Right cardiac atrium (tissue), 5 donors: ENCODE measurements at regions of chr22 and their contacts with region 1.

Region 1: GRCh38 chr22:24200616-24201212 is 19.4 kb downstream of the SUSD2 start:
- DNase-seq: no peak
- ATAC-seq: no peak
- H3K4me3 ChIP-seq: no peak overlapping the region
- H3K27ac ChIP-seq: no peak overlapping the region
- H3K4me1 ChIP-seq: peaks cover under 1% of the 10 kb centered on the region
- H3K27me3 ChIP-seq: no peaks in the 10 kb centered on the region

Region 2: GRCh38 chr22:24236656-24237055 is 35.9 kb after region 1 on chr22:
- intact Hi-C with region 1: loop called in 2 of 4 experiments (anchors 5 kb)
- DNase-seq: no peak
- ATAC-seq: no peak
- H3K4me3 ChIP-seq: no peak overlapping the region
- H3K27ac ChIP-seq: no peak overlapping the region
- H3K4me1 ChIP-seq: no peaks in the 10 kb centered on the region
- H3K27me3 ChIP-seq: no peaks in the 10 kb centered on the region

Region 3: GRCh38 chr22:24466716-24467328 is 266.1 kb after region 1 on chr22:
- intact Hi-C with region 1: no loop called
- DNase-seq: peak in 1 of 3 donors; percentile 23
- ATAC-seq: peak; percentile 44 to 45
- H3K4me3 ChIP-seq: no peak overlapping the region
- H3K27ac ChIP-seq: peak overlapping the region; percentile 71
- H3K4me1 ChIP-seq: peaks cover 20% of the 10 kb centered on the region
- H3K27me3 ChIP-seq: no peaks in the 10 kb centered on the region